Mammary epithelial cell (primary cell): ENCODE measurements at regions of chr19 and their contacts with region 1.

Region 1: GRCh38 chr19:38634757-38635482 is 12.5 kb upstream of the ACTN4 start:
- DNase-seq: no peak
- H3K4me3 ChIP-seq: no peak overlapping the region
- H3K27ac ChIP-seq: no peak overlapping the region
- H3K4me1 ChIP-seq: peaks cover 35% of the 10 kb centered on the region
- H3K27me3 ChIP-seq: no peaks in the 10 kb centered on the region
- CTCF ChIP-seq: peak; percentile 89 to 93

Region 2: DNA sequence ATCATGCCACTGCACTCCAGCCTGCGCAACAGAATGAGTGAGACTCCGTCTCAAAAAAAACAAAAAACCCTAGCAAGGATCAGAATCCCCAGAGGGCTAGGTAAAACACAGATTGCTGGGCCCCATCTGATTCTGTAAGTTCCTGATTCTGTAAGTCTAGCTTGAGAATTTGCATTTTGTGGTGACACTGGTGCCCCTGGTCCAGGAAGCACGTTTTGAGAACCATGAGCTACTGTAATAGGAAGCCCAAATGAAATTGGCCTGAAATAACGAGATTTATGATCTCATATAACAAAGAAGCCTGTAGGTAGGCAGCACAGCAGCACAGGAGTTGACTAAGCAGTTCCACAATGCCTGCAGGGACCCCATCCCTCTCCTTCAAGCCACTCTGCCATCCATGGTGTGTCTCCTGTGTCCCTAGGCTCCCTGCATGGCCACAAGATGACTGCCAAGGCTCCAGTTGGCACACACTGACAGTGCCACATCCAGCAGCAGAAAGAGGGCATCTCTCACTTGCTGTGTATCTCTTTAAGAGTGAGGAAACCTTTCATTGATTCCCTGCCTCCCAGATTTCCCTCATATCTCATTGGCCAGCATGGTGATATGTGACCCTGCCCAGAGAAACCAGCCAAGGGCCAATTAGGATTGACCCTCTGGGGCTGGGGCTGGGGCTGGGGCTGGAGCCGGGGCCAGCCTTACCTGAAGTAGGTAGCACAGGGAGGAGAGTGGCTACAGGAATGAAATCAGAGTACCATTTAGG is 706.2 kb before region 1 on chr19:
- CTCF ChIA-PET with region 1: no interaction called
- dilution Hi-C with region 1: no loop called
- in situ Hi-C with region 1: no loop called
- intact Hi-C with region 1: no loop called
- DNase-seq: no peak
- H3K4me3 ChIP-seq: no peak overlapping the region
- H3K27ac ChIP-seq: no peak overlapping the region
- H3K4me1 ChIP-seq: peaks cover 35% of the 10 kb centered on the region
- H3K27me3 ChIP-seq: no peaks in the 10 kb centered on the region
- CTCF ChIP-seq: no peak

Region 3: DNA sequence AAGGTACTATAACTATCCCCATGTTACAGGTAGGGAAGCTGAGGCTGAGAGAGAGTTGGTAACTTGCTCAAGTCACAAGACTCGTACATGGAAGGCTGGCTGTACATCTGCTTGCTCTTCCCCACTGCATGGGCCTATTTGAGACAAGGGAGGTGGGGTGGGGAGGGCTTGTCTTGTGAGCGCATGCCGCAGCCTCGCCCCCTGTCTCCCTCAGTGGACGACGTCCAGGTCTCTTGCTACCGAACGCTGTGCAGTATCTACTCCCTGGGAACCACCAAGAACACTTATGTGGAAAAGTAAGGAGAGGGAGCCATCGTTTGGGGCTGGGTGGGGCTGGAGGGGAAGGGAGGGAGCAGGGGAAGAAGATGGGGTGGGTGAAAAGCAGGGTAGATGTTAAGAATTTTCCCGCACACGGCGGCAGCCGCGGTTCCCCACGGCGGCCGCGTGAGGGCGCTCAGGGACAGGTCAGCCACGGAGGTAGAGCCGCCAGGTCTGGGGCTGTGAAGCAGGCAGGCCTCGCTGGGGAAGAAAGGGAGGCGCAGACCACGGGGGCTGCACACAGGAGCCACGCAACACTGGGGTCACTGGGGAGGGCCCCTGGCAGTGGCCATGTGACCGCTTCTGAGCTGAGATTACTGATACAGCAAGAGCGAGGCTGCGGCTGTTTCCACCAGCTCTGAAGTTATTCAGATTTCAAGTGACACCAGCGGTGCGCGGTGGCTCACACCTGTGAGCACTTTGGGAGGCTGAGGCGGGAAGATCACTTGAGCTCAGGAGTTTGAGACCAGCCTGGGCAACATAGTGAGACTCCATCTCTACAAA is 119.9 kb before region 1 on chr19:
- CTCF ChIA-PET with region 1: no interaction called
- dilution Hi-C with region 1: no loop called
- in situ Hi-C with region 1: no loop called
- intact Hi-C with region 1: loop called (anchors 1 kb)
- DNase-seq: peak; percentile 45
- H3K4me3 ChIP-seq: peak overlapping the region in 1 of 3 experiments; percentile 4
- H3K27ac ChIP-seq: no peak overlapping the region
- H3K4me1 ChIP-seq: no peaks in the 10 kb centered on the region
- H3K27me3 ChIP-seq: no peaks in the 10 kb centered on the region
- CTCF ChIP-seq: peak; percentile 62 to 90

Region 4: DNA sequence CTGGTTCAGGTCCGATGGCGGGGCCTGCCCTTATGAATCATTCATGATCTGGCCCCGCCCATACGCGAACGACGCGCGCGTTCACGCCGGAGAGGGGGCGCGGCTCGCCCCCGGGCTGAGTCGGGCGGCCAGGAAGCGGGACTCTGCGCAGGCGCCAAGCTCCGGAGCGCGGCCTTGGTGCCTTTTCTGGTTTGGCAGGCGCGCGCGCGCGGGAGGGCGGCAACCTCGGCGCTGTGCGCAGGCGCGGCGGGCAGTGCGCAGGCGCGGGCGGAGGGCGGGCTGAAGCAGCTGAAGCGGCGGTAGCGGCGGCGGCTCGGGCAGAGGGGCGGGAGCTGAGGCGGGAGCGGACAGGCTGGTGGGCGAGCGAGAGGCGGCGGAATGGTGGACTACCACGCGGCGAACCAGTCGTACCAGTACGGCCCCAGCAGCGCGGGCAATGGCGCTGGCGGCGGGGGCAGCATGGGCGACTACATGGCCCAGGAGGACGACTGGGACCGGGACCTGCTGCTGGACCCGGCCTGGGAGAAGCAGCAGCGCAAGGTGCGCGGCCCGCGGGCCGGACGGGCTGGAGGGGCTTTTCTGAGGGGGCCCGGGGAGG is 12.5 kb after region 1 on chr19 and contains the start of gene ACTN4:
- CTCF ChIA-PET with region 1: no interaction called
- dilution Hi-C with region 1: no loop called
- in situ Hi-C with region 1: no loop called
- intact Hi-C with region 1: loop called (anchors 2 kb)
- DNase-seq: peak; percentile 96
- H3K4me3 ChIP-seq: peak within 1 kb of the TSS; percentile 89 to 99 (median 95)
- H3K27ac ChIP-seq: peak within 1 kb of the TSS; percentile 100
- H3K4me1 ChIP-seq: peaks cover 20% of the 10 kb centered on the region
- H3K27me3 ChIP-seq: no peaks in the 10 kb centered on the region
- CTCF ChIP-seq: no peak
- total RNA-seq, gene ACTN4: 951 to 1,146 TPM

Region 5: DNA sequence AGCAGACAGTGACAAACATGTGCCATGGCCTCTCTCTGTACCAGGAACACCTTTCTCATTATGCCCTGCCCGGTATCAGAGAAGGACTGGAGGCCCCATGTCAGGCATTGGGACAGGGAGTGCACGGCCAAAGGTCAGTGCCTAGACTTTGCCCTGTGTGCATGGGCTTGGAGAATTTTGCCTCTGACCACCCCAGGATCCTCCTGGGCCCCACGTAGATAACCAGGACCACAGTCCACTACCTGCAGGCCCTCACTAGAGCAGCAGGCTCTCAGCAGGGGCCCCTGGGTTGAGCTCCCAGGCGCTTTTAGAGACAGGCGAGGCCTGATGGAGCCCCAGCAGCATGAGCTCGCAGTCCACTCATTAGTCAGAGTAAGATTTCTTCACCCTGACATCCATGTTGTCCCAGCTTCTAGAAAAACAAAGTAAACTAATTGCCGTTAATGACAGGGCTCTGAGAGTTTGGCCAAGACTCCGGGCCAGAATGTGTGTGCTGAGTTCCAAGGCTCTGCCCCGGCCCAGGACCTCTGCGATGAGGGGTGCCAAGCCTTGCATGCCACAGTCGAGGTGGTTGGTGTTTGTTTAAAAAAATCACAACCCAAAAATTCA is 66.6 kb after region 1 on chr19:
- CTCF ChIA-PET with region 1: no interaction called
- dilution Hi-C with region 1: no loop called
- in situ Hi-C with region 1: no loop called
- intact Hi-C with region 1: loop called (anchors 1 kb)
- DNase-seq: no peak
- H3K4me3 ChIP-seq: no peak overlapping the region
- H3K27ac ChIP-seq: no peak overlapping the region
- H3K4me1 ChIP-seq: peaks cover 50% of the 10 kb centered on the region
- H3K27me3 ChIP-seq: no peaks in the 10 kb centered on the region
- CTCF ChIP-seq: no peak

Region 6: DNA sequence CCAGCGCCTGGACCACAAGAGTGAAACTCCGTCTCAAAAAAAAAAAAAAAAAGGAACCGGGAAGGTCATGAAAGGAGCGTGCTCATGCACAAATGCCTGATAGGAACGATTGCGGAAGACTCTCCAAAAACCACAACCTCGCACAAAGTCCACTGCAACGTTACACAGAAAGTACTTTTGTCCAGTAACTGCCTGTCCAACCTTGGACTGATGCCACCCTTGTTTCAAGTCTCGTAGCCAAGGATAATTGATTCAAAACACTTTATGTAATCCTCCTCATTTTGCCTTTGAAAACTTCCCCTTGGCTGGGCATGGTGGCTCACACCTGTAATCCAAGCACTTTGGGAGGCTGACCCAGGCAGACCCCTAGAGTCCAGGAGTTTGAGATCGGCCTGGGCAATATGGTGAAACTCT is 124.7 kb after region 1 on chr19:
- CTCF ChIA-PET with region 1: interaction called, 17 read pairs
- dilution Hi-C with region 1: no loop called
- in situ Hi-C with region 1: no loop called
- intact Hi-C with region 1: no loop called
- DNase-seq: no peak
- H3K4me3 ChIP-seq: no peak overlapping the region
- H3K27ac ChIP-seq: no peak overlapping the region
- H3K4me1 ChIP-seq: no peaks in the 10 kb centered on the region
- H3K27me3 ChIP-seq: no peaks in the 10 kb centered on the region
- CTCF ChIP-seq: no peak

Region 7: DNA sequence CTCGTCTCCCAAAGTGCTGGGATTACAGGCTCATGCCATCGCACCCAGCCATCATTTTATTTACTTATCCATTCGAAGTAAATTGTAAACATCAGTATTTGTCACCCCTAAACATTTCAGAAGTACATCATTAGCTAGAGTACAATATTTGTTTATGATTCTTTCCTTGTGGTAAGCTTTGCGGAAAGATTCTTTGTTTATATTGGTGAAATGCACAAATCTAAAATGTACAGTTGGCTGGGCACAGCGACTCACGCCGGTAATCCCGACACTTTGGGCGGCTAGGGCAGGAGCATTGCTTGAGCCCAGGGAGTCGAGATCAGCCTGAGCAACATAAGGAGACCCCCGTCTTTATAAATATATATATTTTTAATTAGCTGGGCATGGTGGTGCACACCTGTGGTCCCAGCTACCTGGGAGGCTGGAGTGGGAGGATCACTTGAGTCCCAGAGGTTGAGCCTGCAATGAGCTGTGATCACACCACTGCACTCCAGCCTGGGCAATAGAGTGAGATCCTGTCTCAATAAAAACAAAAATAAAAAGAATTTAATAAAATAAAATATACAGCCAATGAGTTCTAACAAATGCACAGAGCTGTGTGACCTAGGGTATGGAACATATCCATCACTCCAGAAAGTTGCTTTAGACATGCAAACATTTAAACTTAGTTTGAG is 164.3 kb after region 1 on chr19:
- CTCF ChIA-PET with region 1: no interaction called
- dilution Hi-C with region 1: no loop called
- in situ Hi-C with region 1: no loop called
- intact Hi-C with region 1: no loop called
- DNase-seq: no peak
- H3K4me3 ChIP-seq: no peak overlapping the region
- H3K27ac ChIP-seq: peak overlapping the region; percentile 37
- H3K4me1 ChIP-seq: peaks cover 8% of the 10 kb centered on the region
- H3K27me3 ChIP-seq: no peaks in the 10 kb centered on the region
- CTCF ChIP-seq: no peak